HCT116 (cell line): ENCODE measurements at regions of chr9 and their contacts with region 1.

Region 1: GRCh38 chr9:35690431-35691333 is 957 bp upstream of the TPM2 start:
- DNase-seq: no peak
- ATAC-seq: peak; percentile 64
- H3K4me3 ChIP-seq: peak overlapping the region; percentile 83 to 90
- H3K27ac ChIP-seq: peak overlapping the region; percentile 97
- H3K4me1 ChIP-seq: peaks cover 18 to 30% of the 10 kb centered on the region in 2 experiments
- H3K27me3 ChIP-seq: no peaks in the 10 kb centered on the region
- CTCF ChIP-seq: no peak
- POLR2A ChIP-seq: no peak
- RAD21 ChIP-seq: no peak

Region 2: GRCh38 chr9:35664531-35665470 is 25.9 kb before region 1 on chr9 and contains the start of gene ARHGEF39:
- CTCF ChIA-PET with region 1: interaction called, 33 read pairs
- POLR2A ChIA-PET with region 1: interaction called, 16 read pairs
- RAD21 ChIA-PET with region 1: no interaction called
- intact Hi-C with region 1: no loop called
- DNase-seq: peak; percentile 59
- ATAC-seq: peak; percentile 89
- H3K4me3 ChIP-seq: peak within 1 kb of the TSS; percentile 91 to 93
- H3K27ac ChIP-seq: peak within 1 kb of the TSS; percentile 88
- H3K4me1 ChIP-seq: peaks cover 25 to 60% of the 10 kb centered on the region in 2 experiments; a peak in 3 of 4 replicates
- H3K27me3 ChIP-seq: no peaks in the 10 kb centered on the region
- CTCF ChIP-seq: peak in 1 of 3 experiments; percentile 30; a peak in 1 of 6 replicates
- POLR2A ChIP-seq: peak; percentile 87
- RAD21 ChIP-seq: no peak
- total RNA-seq, gene ARHGEF39: 29.8 TPM

Region 3: DNA sequence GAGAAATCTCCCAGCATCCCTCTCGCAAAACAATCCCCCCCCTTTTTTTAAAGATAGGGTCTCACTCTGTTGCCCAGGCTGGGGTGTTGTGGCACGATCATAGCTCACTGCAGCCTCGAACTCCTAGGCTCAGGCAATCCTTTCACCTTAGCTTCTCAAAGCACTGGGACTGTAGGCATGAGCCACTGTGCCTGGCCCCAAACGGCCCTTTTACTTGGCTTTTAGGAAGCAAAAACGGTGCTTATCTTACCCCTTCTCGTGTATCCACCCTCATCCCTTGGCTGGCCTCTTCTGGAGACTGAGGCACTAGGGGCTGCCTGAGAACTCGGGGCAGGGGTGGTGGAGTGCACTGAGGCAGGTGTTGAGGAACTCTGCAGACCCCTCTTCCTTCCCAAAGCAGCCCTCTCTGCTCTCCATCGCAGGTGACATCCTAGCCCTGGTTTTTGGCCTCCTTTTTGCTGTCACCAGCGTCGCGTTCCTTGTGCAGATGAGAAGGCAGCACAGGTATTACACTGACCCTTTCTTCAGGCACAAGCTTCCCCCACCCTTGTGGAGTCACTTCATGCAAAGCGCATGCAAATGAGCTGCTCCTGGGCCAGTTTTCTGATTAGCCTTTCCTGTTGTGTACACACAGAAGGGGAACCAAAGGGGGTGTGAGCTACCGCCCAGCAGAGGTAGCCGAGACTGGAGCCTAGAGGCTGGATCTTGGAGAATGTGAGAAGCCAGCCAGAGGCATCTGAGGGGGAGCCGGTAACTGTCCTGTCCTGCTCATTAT is 10.2 kb before region 1 on chr9:
- CTCF ChIA-PET with region 1: no interaction called
- POLR2A ChIA-PET with region 1: interaction called, 15 read pairs
- RAD21 ChIA-PET with region 1: no interaction called
- intact Hi-C with region 1: no loop called
- DNase-seq: no peak
- ATAC-seq: peak; percentile 28
- H3K4me3 ChIP-seq: no peak overlapping the region
- H3K27ac ChIP-seq: no peak overlapping the region
- H3K4me1 ChIP-seq: no peaks in the 10 kb centered on the region
- H3K27me3 ChIP-seq: no peaks in the 10 kb centered on the region
- CTCF ChIP-seq: no peak
- POLR2A ChIP-seq: no peak
- RAD21 ChIP-seq: no peak

Region 4: GRCh38 chr9:35778496-35778895 is 87.8 kb after region 1 on chr9:
- CTCF ChIA-PET with region 1: no interaction called
- POLR2A ChIA-PET with region 1: no interaction called
- RAD21 ChIA-PET with region 1: no interaction called
- intact Hi-C with region 1: no loop called
- DNase-seq: no peak
- ATAC-seq: no peak
- H3K4me3 ChIP-seq: no peak overlapping the region
- H3K27ac ChIP-seq: no peak overlapping the region
- H3K4me1 ChIP-seq: peaks cover 0 to 2% of the 10 kb centered on the region in 2 experiments; a peak in 1 of 4 replicates
- H3K27me3 ChIP-seq: no peaks in the 10 kb centered on the region
- CTCF ChIP-seq: no peak
- POLR2A ChIP-seq: no peak
- RAD21 ChIP-seq: no peak